Dendritic cell treated with granulocyte-macrophage colony-stimulating factor and Interleukin-4, amounts not matched to agents 40 ng/mL and 50 ng/mL, for 4 days (primary cell): ENCODE measurements at regions of chr17 and their contacts with region 1.

Region 1: GRCh38 chr17:50783193-50783660 is 15.9 kb upstream of the ANKRD40CL start:
- H3K4me3 Mint-ChIP-seq: no peak overlapping the region
- H3K27ac Mint-ChIP-seq: no peak overlapping the region
- H3K4me1 Mint-ChIP-seq: peaks cover 5% of the 10 kb centered on the region
- H3K27me3 Mint-ChIP-seq: peaks cover 15% of the 10 kb centered on the region

Region 2: DNA sequence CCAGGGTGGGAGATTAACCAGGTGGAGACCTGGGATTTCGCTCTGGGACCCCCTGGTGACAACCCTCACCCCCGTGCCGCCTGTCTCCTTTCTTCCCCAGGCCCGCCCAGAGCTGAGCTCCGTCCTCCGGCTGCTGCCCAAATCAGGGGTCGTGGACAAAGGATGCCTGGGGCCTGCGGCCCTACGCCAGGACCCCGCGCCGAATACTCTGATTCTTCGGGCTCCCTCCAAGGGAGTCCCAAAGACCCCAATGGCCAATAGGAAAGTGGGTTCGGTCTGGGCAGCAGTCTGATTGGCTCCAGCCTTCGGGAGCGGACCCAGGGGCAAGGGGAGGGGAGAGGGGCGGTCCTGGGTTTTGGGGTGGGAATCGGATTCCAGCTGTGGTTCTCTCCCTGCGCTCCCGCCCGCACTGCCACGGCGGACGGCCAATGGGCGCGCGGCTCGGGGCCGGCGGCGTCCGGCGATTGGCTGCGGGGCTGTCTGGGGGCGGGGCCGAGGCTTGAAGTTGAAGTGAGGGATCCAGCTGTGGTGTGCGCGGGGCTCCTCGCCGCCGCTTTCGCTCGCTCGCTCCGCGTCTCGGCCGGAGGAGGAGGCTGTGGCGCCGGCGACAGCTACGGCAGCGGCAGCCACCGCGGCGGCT is 222.9 kb before region 1 on chr17 and contains the start of gene CACNA1G:
- intact Hi-C with region 1: no loop called
- H3K4me3 Mint-ChIP-seq: peak within 1 kb of the TSS; percentile 76
- H3K27ac Mint-ChIP-seq: peak within 1 kb of the TSS; percentile 16
- H3K4me1 Mint-ChIP-seq: peaks cover 33% of the 10 kb centered on the region
- H3K27me3 Mint-ChIP-seq: peaks cover 79% of the 10 kb centered on the region

Region 3: DNA sequence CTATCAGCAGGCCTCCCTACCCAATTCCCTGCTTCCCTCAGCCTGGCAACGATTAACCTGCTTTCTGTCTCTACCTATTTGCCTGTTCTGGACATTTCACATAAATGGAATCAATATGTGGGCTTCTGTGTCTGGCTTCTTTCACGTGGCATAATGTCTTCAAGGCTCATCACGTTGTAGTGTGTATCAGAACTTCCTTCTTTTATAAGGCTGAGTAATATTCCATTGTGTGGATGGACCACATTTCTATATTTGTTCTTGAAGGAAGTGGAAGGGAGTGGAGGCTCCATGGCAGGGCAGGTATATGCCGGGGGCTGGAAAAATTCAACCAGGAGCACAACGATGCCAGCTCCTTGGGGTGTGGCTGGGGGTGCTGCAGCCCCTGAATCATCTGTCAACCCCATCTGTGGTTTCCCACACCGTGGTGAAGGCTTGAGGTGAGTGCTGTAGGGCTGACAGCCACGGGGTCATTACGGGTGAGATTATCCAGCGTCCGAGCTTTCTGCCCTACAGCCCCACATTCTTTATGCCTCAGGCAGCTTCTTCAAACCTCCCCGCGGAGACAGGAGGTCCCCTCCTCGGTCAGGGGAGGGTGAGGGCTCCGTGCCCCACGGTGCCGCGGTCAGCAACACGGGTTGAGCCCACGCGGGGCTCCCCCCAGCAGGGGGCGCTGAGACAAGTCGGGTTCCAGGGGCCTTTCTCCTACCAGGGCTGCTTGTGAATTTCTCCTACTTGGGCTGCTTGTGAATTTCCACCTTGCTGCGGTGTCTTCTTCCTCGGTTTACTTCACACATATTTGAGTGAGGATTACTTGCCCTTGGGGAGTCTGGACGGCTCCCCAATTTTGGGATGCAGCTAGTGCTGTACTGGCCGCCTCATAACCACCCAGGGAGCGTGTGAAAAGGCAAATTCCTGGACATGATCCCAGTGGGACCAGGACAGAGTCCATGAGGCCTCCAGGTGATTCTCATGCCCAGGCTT is 33.8 kb after region 1 on chr17:
- intact Hi-C with region 1: loop called (anchors 2 kb)
- H3K4me3 Mint-ChIP-seq: no peak overlapping the region
- H3K27ac Mint-ChIP-seq: no peak overlapping the region
- H3K4me1 Mint-ChIP-seq: peaks cover 35% of the 10 kb centered on the region
- H3K27me3 Mint-ChIP-seq: peaks cover 21% of the 10 kb centered on the region

Region 4: DNA sequence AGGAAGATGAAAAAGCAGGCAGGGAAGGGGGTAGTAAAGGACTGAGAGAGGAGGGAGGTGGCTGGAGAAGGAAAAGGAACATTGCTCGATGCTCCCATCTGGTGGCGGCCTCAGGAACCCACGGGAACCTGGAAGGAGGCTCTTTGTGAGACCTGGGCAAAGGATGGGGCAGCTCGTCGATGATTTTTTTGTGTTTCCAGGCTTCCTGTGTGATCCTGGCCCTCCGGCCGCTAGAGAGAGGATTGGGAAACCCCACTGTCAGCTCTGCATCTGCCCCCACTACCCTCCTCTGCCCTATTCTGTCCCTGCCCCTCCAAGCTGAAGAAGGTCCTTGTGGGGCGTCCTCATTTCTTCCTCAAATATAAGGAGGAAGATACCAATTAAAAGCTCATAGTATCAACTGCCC is 58.7 kb after region 1 on chr17:
- intact Hi-C with region 1: loop called (anchors 1 kb)
- H3K4me3 Mint-ChIP-seq: no peak overlapping the region
- H3K27ac Mint-ChIP-seq: no peak overlapping the region
- H3K4me1 Mint-ChIP-seq: peaks cover 8% of the 10 kb centered on the region
- H3K27me3 Mint-ChIP-seq: no peaks in the 10 kb centered on the region

Region 5: DNA sequence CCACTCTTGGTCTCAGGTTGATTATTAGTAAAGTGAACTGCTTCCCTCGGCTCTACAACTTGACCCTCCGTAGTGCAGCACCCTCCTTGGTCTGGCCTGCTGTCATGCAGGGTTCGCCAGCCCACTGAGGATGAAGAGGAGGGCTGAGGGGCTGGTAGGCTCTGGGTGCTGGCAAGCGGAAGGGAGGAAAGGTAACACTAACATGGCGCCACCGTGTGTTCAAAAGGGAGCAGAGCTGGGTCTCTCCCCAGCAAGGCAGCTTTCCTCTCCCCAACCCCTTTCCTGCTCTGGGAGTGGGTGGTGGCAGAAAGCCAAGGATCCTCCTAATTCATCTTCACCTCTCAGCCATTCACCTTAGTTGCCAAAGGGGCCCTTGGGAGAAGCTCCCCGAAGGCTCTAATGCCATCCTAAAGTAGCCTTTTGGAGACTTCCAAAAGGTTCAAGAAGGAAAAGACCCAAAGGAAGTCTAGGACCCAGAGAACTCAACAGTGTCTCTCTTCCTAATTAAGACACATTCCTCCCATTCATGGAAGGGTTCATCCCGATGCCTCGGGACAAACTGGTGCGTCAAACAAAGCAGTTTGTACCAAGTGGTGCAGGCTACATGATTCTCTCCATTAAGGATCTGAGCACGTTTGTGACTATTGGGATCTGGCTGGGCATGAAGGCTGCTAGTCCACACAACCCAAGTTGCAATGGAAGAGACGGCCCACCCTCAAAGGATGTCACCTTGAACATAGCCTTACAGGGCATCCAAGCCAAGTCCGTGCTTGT is 173.7 kb after region 1 on chr17:
- intact Hi-C with region 1: loop called (anchors 5 kb)
- H3K4me3 Mint-ChIP-seq: no peak overlapping the region
- H3K27ac Mint-ChIP-seq: no peak overlapping the region
- H3K4me1 Mint-ChIP-seq: peaks cover 39% of the 10 kb centered on the region
- H3K27me3 Mint-ChIP-seq: peaks cover 8% of the 10 kb centered on the region